ENCODE measurements at regions of chr15 and their contacts with region 1.

Region 1: GRCh38 chr15:63466378-63467192 is 37.8 kb upstream of the USP3 start:
- DNase-seq: peak; percentile 74
- ATAC-seq: peak; percentile 94
- H3K4me3 ChIP-seq: no peak overlapping the region
- H3K27ac ChIP-seq: no peak overlapping the region
- H3K4me1 ChIP-seq: peaks cover 5 to 29% of the 10 kb centered on the region in 2 experiments
- H3K27me3 ChIP-seq: no peaks in the 10 kb centered on the region
- CTCF ChIP-seq: peak; percentile 52 to 75 (median 66); a peak in 5 of 6 replicates
- POLR2A ChIP-seq: no peak
- RAD21 ChIP-seq: peak; percentile 87

Region 2: DNA sequence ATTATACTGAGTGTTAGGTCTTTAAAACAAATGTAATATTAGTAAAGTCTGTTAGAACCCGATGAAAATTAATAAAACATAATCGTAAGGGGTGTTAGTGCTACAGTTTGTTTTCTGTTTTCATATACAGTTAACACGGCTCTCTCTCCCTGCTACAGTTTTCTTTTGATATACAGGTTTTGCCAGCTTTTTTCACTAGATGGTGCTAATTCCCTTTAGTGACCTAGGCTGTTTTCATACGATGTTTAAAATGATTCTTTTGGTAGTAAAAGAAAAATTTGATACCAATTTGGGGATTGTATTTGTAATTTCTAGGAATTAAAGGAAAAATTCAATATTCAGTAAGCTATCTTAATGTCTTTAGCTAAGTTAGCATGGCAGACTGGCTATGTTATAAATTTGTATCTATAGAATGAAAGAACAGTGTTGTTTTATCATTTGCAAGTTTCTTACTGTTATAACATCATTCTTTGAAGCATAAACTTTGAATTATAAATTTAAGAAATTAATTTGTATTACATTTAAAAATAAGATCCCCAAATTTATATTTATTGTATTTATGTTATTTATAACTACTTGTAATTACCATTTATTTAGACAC is 177.7 kb before region 1 on chr15:
- CTCF ChIA-PET with region 1: interaction called, 7 read pairs
- POLR2A ChIA-PET with region 1: no interaction called
- RAD21 ChIA-PET with region 1: no interaction called
- intact Hi-C with region 1: loop called (anchors 1 kb)
- DNase-seq: peak; percentile 33
- ATAC-seq: peak; percentile 60; the same call in 1 of the 2 replicates
- H3K4me3 ChIP-seq: no peak overlapping the region
- H3K27ac ChIP-seq: no peak overlapping the region
- H3K4me1 ChIP-seq: peaks cover 0 to 7% of the 10 kb centered on the region in 2 experiments; a peak in 2 of 4 replicates
- H3K27me3 ChIP-seq: no peaks in the 10 kb centered on the region
- CTCF ChIP-seq: peak; percentile 51 to 79 (median 73)
- POLR2A ChIP-seq: no peak
- RAD21 ChIP-seq: peak; percentile 85

Region 3: DNA sequence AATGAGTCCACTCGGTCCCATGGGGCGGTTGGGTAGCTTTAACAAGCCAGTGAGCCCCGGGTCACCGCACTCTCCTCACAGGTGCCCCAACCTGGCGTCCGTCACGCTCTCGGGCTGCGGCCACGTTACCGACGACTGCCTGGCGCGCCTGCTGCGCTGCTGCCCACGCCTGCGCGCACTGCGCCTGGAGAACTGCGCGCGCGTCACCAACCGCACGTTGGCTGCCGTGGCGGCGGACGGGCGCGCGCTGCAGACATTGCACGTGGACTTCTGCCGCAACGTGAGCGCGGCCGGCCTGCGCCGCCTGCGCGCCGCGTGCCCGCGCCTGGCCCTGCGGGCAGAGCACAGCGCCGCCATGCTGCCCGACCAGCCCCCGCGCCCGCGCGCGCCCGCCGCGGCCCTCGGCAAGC is 134.0 kb after region 1 on chr15:
- CTCF ChIA-PET with region 1: interaction called, 55 read pairs
- POLR2A ChIA-PET with region 1: interaction called, 7 read pairs
- RAD21 ChIA-PET with region 1: interaction called, 5 to 6 read pairs
- intact Hi-C with region 1: loop called (anchors 1 kb)
- DNase-seq: peak; percentile 79
- ATAC-seq: peak; percentile 82
- H3K4me3 ChIP-seq: peak overlapping the region; percentile 77 to 85
- H3K27ac ChIP-seq: peak overlapping the region; percentile 74
- H3K4me1 ChIP-seq: peaks cover 13 to 31% of the 10 kb centered on the region in 2 experiments; a peak in 3 of 4 replicates
- H3K27me3 ChIP-seq: no peaks in the 10 kb centered on the region
- CTCF ChIP-seq: no peak
- POLR2A ChIP-seq: peak; percentile 83
- RAD21 ChIP-seq: no peak

Region 4: GRCh38 chr15:63610200-63610841 is 143.7 kb after region 1 on chr15:
- CTCF ChIA-PET with region 1: interaction called, 11 read pairs
- POLR2A ChIA-PET with region 1: no interaction called
- RAD21 ChIA-PET with region 1: interaction called in 1 of 2 experiments, 5 read pairs
- intact Hi-C with region 1: no loop called
- DNase-seq: peak; percentile 69
- ATAC-seq: peak; percentile 98
- H3K4me3 ChIP-seq: no peak overlapping the region
- H3K27ac ChIP-seq: no peak overlapping the region
- H3K4me1 ChIP-seq: peaks cover 0 to 4% of the 10 kb centered on the region in 2 experiments; a peak in 1 of 4 replicates
- H3K27me3 ChIP-seq: no peaks in the 10 kb centered on the region
- CTCF ChIP-seq: peak; percentile 77 to 82 (median 80)
- POLR2A ChIP-seq: no peak
- RAD21 ChIP-seq: peak; percentile 90

Region 5: GRCh38 chr15:63915873-63916771 is 449.5 kb after region 1 on chr15:
- CTCF ChIA-PET with region 1: no interaction called
- POLR2A ChIA-PET with region 1: no interaction called
- RAD21 ChIA-PET with region 1: no interaction called
- intact Hi-C with region 1: no loop called
- DNase-seq: no peak
- ATAC-seq: peak; percentile 89
- H3K4me3 ChIP-seq: no peak overlapping the region
- H3K27ac ChIP-seq: no peak overlapping the region
- H3K4me1 ChIP-seq: peaks cover 13% of the 10 kb centered on the region in 2 experiments; a peak in 3 of 4 replicates
- H3K27me3 ChIP-seq: no peaks in the 10 kb centered on the region
- CTCF ChIP-seq: peak in 2 of 3 experiments; percentile 2 to 32; a peak in 3 of 6 replicates
- POLR2A ChIP-seq: no peak
- RAD21 ChIP-seq: no peak